A673 (cell line): ENCODE measurements at regions of chr22 and their contacts with region 1.

Region 1: GRCh38 chr22:36123673-36124630 is 36.6 kb downstream of the APOL3 start:
- DNase-seq: peak; percentile 98
- H3K4me3 ChIP-seq: no peak overlapping the region
- H3K27ac ChIP-seq: peak overlapping the region; percentile 63
- H3K4me1 ChIP-seq: peaks cover 8% of the 10 kb centered on the region
- H3K27me3 ChIP-seq: no peaks in the 10 kb centered on the region
- CTCF ChIP-seq: peak; percentile 99

Region 2: GRCh38 chr22:34620832-34621231 is 1503.1 kb before region 1 on chr22:
- CTCF ChIA-PET with region 1: no interaction called
- POLR2A ChIA-PET with region 1: no interaction called
- intact Hi-C with region 1: no loop called
- DNase-seq: no peak
- H3K4me3 ChIP-seq: no peak overlapping the region
- H3K27ac ChIP-seq: no peak overlapping the region
- H3K4me1 ChIP-seq: no peaks in the 10 kb centered on the region
- H3K27me3 ChIP-seq: no peaks in the 10 kb centered on the region
- CTCF ChIP-seq: no peak

Region 3: DNA sequence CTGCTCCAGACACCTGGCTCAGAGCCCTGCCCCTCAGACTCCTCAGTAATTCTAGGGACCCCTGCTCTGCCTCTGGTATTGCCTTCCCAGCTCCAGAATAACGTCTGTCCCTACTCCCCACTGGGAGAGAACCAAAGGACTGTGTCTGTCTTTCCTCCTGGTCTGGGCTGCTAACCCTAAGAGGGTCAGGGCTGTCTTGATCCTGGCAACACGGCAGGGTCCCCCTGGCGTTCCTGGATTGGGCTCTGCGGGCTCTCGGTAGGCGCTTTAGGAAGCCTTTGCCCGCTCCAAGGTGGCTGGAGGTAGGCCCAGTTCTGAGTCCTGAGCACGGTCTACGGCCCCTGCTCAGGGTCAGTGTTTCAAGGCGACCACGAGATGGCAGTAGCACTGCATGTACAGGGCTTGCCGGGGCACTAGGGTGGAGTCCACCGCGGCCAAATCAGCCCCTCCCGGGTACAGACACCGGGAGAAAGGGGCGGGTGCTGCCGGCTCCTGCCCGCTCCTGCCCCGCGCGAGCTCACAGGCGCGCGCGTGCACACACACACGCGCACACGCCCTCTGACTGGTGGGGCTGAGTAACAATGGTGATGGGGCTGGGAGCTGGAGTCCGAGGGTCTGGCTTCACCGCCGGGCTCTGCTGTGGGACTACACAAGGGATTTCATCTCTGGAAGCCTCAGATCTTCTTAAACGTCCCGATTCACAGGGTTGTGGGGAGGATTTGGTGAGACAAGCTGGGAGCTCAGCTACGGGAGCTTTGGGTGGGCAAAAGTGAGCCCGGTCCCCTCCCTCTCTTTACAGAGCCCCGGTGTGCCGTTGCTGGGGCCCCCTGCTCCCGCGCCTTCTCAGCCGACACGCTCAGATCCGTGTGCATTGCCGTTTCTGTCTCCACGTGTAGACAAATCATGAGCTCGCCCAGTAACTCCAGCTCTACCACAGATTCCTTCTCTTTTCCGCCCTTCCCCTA is 773.1 kb before region 1 on chr22:
- CTCF ChIA-PET with region 1: no interaction called
- POLR2A ChIA-PET with region 1: no interaction called
- intact Hi-C with region 1: loop called (anchors 5 kb)
- DNase-seq: peak; percentile 91
- H3K4me3 ChIP-seq: peak overlapping the region; percentile 55
- H3K27ac ChIP-seq: peak overlapping the region; percentile 27
- H3K4me1 ChIP-seq: peaks cover 13% of the 10 kb centered on the region
- H3K27me3 ChIP-seq: no peaks in the 10 kb centered on the region
- CTCF ChIP-seq: peak; percentile 90

Region 4: GRCh38 chr22:35582861-35583670 is 540.9 kb before region 1 on chr22:
- CTCF ChIA-PET with region 1: no interaction called
- POLR2A ChIA-PET with region 1: no interaction called
- intact Hi-C with region 1: loop called (anchors 5 kb)
- DNase-seq: peak; percentile 72
- H3K4me3 ChIP-seq: no peak overlapping the region
- H3K27ac ChIP-seq: no peak overlapping the region
- H3K4me1 ChIP-seq: no peaks in the 10 kb centered on the region
- H3K27me3 ChIP-seq: no peaks in the 10 kb centered on the region
- CTCF ChIP-seq: peak; percentile 93

Region 5: DNA sequence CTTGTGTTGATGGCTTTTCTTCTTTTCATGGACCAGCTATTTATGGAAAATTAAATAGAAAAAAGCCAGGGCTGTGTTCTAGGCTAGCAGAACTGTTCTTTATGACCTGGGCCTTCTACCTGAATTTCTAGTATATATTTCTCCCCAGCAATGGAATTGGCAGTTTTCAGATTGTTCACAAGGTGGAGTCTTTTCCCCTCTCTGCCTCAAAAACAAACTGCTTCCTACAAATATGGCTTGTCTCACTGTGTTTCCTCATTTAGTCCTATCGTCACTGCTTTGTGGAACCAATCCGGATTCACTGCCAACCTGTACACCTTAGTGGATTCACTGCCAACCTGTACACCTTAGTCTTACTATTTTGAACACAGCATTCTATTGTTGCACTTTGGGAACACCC is 411.3 kb before region 1 on chr22:
- CTCF ChIA-PET with region 1: no interaction called
- POLR2A ChIA-PET with region 1: no interaction called
- intact Hi-C with region 1: loop called (anchors 10 kb)
- DNase-seq: no peak
- H3K4me3 ChIP-seq: no peak overlapping the region
- H3K27ac ChIP-seq: no peak overlapping the region
- H3K4me1 ChIP-seq: peaks cover 4% of the 10 kb centered on the region
- H3K27me3 ChIP-seq: no peaks in the 10 kb centered on the region
- CTCF ChIP-seq: 0 out of 2 replicates have a peak, but pooled peaks have one; percentile 7

Region 6: DNA sequence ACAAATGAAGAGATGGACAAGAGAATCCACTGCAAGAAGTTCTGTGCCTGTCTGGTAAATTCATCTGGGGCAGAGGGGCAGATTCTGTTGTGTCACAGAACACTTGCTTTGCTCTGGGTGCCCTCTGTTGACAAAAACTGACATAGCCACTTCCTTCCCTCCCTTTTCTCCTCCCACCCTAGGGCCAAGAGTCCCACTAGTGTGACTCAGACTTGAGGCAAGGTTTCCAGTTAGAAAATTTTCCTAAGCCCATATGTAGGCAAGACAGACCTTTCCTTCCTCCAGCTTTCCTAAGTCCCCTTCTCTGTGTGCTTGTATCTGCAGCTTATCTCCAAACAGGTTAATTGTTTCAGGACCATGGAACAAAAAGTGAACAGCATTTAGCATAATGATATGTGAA is 202.2 kb before region 1 on chr22:
- CTCF ChIA-PET with region 1: no interaction called
- POLR2A ChIA-PET with region 1: no interaction called
- intact Hi-C with region 1: loop called (anchors 2 kb)
- DNase-seq: peak; percentile 93
- H3K4me3 ChIP-seq: no peak overlapping the region
- H3K27ac ChIP-seq: peak overlapping the region; percentile 3
- H3K4me1 ChIP-seq: peaks cover 72% of the 10 kb centered on the region
- H3K27me3 ChIP-seq: no peaks in the 10 kb centered on the region
- CTCF ChIP-seq: peak; percentile 79

Region 7: DNA sequence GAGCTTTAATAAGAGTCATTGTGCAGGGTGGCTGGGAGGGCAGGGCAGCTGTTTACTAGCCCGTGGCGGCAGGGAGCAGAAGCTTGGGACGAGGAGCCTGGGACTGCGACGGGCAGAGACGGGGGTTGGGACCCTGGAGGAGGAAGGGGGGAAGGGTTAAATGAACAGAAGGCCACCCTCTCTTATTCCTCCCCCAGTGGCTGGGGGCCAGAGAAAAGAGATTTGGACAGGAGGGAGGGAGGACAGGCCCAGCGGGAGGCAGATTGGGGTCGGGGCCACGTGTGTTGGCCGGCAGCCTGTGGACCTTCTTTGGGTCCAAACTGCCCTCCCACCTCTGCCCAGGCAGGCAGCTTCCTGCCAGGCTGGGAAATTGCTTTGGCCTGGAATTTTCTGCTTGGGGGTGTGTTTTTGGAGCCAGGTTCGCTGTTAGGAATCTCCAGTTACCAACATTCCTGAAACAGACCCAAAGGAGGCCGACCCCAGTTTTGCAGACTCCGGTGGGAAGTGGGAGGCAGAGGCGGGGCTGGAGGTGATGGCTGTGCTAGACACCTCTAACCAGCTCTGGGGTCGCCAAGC is 13.6 kb before region 1 on chr22:
- CTCF ChIA-PET with region 1: no interaction called
- POLR2A ChIA-PET with region 1: no interaction called
- intact Hi-C with region 1: no loop called
- DNase-seq: no peak
- H3K4me3 ChIP-seq: no peak overlapping the region
- H3K27ac ChIP-seq: no peak overlapping the region
- H3K4me1 ChIP-seq: no peaks in the 10 kb centered on the region
- H3K27me3 ChIP-seq: no peaks in the 10 kb centered on the region
- CTCF ChIP-seq: no peak